Activated CD4-positive, alpha-beta memory T cell treated with anti-CD3 and anti-CD28 coated beads, Interleukin-2, amount 10 ng/mL, durations not matched to agents 7 days and 5 days (primary cell): ENCODE measurements at regions of chr4 and their contacts with region 1.

Region 1: GRCh38 chr4:109278594-109279031 is 23.8 kb downstream of the COL25A1 start:
- DNase-seq: no peak
- H3K4me3 Mint-ChIP-seq: no peak overlapping the region
- H3K27ac Mint-ChIP-seq: no peak overlapping the region
- H3K4me1 Mint-ChIP-seq: peaks cover 18% of the 10 kb centered on the region
- H3K27me3 Mint-ChIP-seq: peaks cover 7% of the 10 kb centered on the region

Region 2: GRCh38 chr4:109251396-109251795 is 27.2 kb before region 1 on chr4:
- CTCF ChIA-PET with region 1: no interaction called
- POLR2A ChIA-PET with region 1: no interaction called
- DNase-seq: no peak
- H3K4me3 Mint-ChIP-seq: no peak overlapping the region
- H3K27ac Mint-ChIP-seq: no peak overlapping the region
- H3K4me1 Mint-ChIP-seq: no peaks in the 10 kb centered on the region
- H3K27me3 Mint-ChIP-seq: peaks cover 9% of the 10 kb centered on the region

Region 3: DNA sequence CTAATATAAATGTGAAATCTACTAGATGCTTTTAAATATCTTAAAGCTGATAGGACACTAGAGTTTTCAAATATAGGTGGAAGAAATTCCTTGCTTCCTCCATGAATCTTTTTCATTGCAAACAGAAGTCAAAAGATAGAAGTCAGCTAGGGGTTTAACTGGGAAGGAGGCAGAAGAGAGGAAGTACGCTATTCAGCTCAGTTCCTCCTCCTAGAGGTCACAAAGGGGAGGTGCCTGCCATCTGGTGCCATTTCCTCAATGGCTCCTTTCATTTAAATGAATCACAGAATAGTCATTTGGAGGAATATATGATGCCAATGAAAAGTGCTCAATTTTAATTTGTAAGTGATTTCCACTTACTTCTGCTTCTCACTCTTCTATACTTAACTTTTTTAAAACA is 15.4 kb after region 1 on chr4:
- CTCF ChIA-PET with region 1: interaction called, 10 read pairs
- POLR2A ChIA-PET with region 1: no interaction called
- DNase-seq: peak; percentile 35
- H3K4me3 Mint-ChIP-seq: no peak overlapping the region
- H3K27ac Mint-ChIP-seq: no peak overlapping the region
- H3K4me1 Mint-ChIP-seq: no peaks in the 10 kb centered on the region
- H3K27me3 Mint-ChIP-seq: peaks cover 28% of the 10 kb centered on the region

Region 4: GRCh38 chr4:109332926-109333464 is 54.4 kb after region 1 on chr4:
- CTCF ChIA-PET with region 1: no interaction called
- POLR2A ChIA-PET with region 1: no interaction called
- DNase-seq: no peak
- H3K4me3 Mint-ChIP-seq: no peak overlapping the region
- H3K27ac Mint-ChIP-seq: no peak overlapping the region
- H3K4me1 Mint-ChIP-seq: no peaks in the 10 kb centered on the region
- H3K27me3 Mint-ChIP-seq: peaks cover 7% of the 10 kb centered on the region